ENCODE measurements at regions of chr14 and their contacts with region 1.

Region 1: DNA sequence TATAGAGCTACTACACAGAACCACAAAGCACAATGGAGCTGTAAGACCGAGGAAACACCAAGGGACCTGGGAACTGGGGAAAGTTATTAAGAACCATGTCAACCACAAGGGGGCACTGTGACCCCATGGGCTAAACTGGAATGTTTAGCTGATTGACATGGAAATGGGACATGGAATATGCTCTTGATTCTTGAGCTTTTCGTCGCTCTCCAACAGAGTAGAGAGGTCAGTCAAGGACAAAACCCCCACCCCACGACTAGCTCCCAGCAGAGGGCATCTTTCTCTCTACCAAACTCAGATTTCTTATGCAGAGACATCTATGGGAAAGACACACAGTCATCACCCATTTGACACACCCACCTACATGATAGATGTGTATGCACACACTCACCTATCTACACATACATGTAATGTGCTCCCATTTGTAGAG is 10.1 kb downstream of the NDRG2 start:
- DNase-seq: peak; percentile 67 to 91 (median 78)
- ATAC-seq: peak; percentile 87
- H3K4me3 ChIP-seq: no peak overlapping the region
- H3K4me3 Mint-ChIP-seq: no peak overlapping the region
- H3K27ac ChIP-seq: no peak overlapping the region
- H3K27ac Mint-ChIP-seq: no peak overlapping the region
- H3K4me1 ChIP-seq: no peaks in the 10 kb centered on the region
- H3K4me1 Mint-ChIP-seq: no peaks in the 10 kb centered on the region
- H3K27me3 ChIP-seq: peaks cover 0 to 6% of the 10 kb centered on the region in 2 experiments
- H3K27me3 Mint-ChIP-seq: peaks cover 23% of the 10 kb centered on the region
- CTCF ChIP-seq: peak; percentile 95

Region 2: GRCh38 chr14:20998664-20999366 is 16.0 kb before region 1 on chr14 and contains the start of gene SLC39A2:
- CTCF ChIA-PET with region 1: interaction called, 12 read pairs
- POLR2A ChIA-PET with region 1: interaction called, 4 read pairs
- intact Hi-C with region 1: no loop called
- DNase-seq: no peak
- ATAC-seq: no peak
- H3K4me3 ChIP-seq: no peak within 1 kb of the TSS
- H3K4me3 Mint-ChIP-seq: no peak within 1 kb of the TSS
- H3K27ac ChIP-seq: no peak within 1 kb of the TSS
- H3K27ac Mint-ChIP-seq: peak within 1 kb of the TSS; percentile 40
- H3K4me1 ChIP-seq: no peaks in the 10 kb centered on the region
- H3K4me1 Mint-ChIP-seq: peaks cover 34% of the 10 kb centered on the region
- H3K27me3 ChIP-seq: no peaks in the 10 kb centered on the region
- H3K27me3 Mint-ChIP-seq: no peaks in the 10 kb centered on the region
- CTCF ChIP-seq: no peak
- total RNA-seq, gene SLC39A2: not detected

Region 3: DNA sequence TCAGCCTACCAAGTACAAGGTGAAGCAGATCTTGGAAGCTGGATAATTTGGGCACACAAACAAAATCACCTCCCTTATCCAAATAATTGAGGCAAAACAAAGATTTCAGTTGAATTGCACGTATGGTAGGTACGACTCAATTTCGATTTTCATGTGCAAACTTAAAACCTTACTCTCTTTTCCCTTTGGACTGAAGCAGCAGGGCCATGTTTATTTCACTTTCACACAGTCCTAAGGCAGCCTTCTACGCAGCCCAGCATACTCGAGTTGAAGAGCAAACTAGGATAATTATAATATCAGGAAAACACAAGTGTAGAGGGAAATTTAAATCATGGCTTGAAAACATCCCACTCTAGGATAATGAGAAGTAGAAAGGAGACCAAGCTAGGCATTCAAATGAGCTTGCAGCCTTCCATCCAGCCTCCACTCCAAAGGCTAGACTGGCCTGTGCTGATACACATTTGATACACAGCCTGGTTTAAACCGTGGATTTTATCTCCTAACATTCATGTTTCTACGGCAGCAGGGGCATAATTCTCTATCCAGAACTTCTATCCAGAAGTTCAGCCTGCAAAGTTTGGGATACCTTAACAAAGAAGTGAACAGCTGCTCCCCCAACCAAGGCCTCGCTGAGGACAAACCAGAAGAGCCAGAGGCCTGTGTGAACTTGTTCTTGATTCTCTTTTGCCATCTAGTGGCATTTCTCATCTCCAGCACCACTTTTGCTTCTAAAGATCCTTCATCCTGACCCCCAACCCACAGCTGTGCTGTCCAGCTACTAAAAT is 25.0 kb after region 1 on chr14:
- CTCF ChIA-PET with region 1: interaction called, 58 read pairs
- POLR2A ChIA-PET with region 1: interaction called, 22 read pairs
- intact Hi-C with region 1: loop called (anchors 1 kb)
- DNase-seq: peak in 6 of 14 experiments; percentile 10 to 73 (median 54)
- ATAC-seq: peak; percentile 73
- H3K4me3 ChIP-seq: no peak overlapping the region
- H3K4me3 Mint-ChIP-seq: no peak overlapping the region
- H3K27ac ChIP-seq: no peak overlapping the region
- H3K27ac Mint-ChIP-seq: no peak overlapping the region
- H3K4me1 ChIP-seq: peaks cover 13% of the 10 kb centered on the region
- H3K4me1 Mint-ChIP-seq: peaks cover 8% of the 10 kb centered on the region
- H3K27me3 ChIP-seq: peaks cover 0 to 3% of the 10 kb centered on the region in 2 experiments
- H3K27me3 Mint-ChIP-seq: peaks cover 10% of the 10 kb centered on the region
- CTCF ChIP-seq: peak; percentile 68

Region 4: GRCh38 chr14:21092273-21093011 is 77.7 kb after region 1 on chr14:
- CTCF ChIA-PET with region 1: interaction called, 56 read pairs
- POLR2A ChIA-PET with region 1: interaction called, 12 read pairs
- intact Hi-C with region 1: loop called (anchors 1 kb)
- DNase-seq: peak; percentile 84 to 97 (median 93)
- ATAC-seq: peak; percentile 80
- H3K4me3 ChIP-seq: no peak overlapping the region
- H3K4me3 Mint-ChIP-seq: peak overlapping the region; percentile 38
- H3K27ac ChIP-seq: no peak overlapping the region
- H3K27ac Mint-ChIP-seq: peak overlapping the region; percentile 56
- H3K4me1 ChIP-seq: peaks cover 29% of the 10 kb centered on the region
- H3K4me1 Mint-ChIP-seq: peaks cover 39% of the 10 kb centered on the region
- H3K27me3 ChIP-seq: no peaks in the 10 kb centered on the region
- H3K27me3 Mint-ChIP-seq: no peaks in the 10 kb centered on the region
- CTCF ChIP-seq: peak; percentile 100

Region 5: GRCh38 chr14:21557084-21557901 is 542.5 kb after region 1 on chr14:
- CTCF ChIA-PET with region 1: no interaction called
- POLR2A ChIA-PET with region 1: no interaction called
- intact Hi-C with region 1: loop called in 1 of 2 experiments (anchors 10 kb)
- DNase-seq: peak; percentile 40 to 91 (median 70)
- ATAC-seq: peak; percentile 70
- H3K4me3 ChIP-seq: peak overlapping the region; percentile 36
- H3K4me3 Mint-ChIP-seq: no peak overlapping the region
- H3K27ac ChIP-seq: no peak overlapping the region
- H3K27ac Mint-ChIP-seq: no peak overlapping the region
- H3K4me1 ChIP-seq: peaks cover 4% of the 10 kb centered on the region
- H3K4me1 Mint-ChIP-seq: peaks cover 6% of the 10 kb centered on the region
- H3K27me3 ChIP-seq: no peaks in the 10 kb centered on the region
- H3K27me3 Mint-ChIP-seq: no peaks in the 10 kb centered on the region
- CTCF ChIP-seq: peak; percentile 80